ENCODE measurements at regions of chr2 and their contacts with region 1.

Region 1: DNA sequence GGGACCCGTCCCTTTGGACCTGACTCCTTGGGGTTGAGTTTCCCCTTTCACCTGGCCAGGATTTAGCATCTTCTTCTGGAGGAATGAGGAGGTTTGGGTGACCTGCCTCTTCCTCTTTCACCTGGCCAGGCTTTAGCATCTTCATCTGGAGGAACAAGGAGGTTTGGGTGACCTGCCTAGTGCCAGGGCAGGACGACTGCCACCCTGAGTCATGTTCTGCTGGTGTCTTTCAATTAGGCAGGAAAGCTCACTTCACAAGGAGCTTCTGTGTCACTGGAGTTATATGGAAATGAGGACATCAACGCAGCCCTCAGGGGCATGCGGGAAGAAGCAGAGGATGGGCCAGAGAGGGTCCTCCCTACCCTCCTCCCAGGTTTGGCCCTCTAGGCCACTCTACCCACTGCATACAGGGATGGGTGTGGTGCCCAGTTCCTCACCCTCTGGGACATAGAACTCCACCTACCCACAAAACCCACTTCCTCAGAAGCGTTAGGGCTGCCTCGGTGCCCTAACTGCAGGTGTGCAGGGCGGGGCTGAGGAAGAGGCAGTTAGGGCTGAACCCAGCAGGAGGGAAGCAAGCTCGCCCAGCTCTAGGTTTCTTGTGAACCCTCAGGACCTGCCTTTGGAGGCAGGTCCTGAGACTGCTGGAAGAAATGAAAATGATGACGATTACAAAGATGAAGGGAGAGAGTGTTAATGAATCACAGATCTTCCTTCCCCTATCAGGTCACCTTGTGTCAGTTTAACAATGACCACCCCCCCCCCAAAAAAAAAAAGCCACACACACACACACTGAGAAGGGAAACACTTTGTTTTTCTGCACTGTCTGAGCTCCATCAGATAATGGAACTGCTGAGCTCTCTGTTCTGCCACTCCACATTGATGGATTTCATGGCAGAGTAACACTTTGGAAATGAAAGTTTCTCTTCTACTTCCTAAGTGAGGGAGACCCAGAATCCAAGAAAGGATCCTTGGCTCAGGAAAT is 71.0 kb downstream of the ARL4C start:
- DNase-seq: peak; percentile 88
- H3K4me3 Mint-ChIP-seq: peak overlapping the region; percentile 57
- H3K27ac Mint-ChIP-seq: peak overlapping the region; percentile 99
- H3K4me1 Mint-ChIP-seq: peaks cover 85% of the 10 kb centered on the region
- H3K27me3 Mint-ChIP-seq: no peaks in the 10 kb centered on the region

Region 2: GRCh38 chr2:234278556-234279255 is 147.2 kb before region 1 on chr2:
- CTCF ChIA-PET with region 1: interaction called, 4 read pairs
- POLR2A ChIA-PET with region 1: interaction called, 16 read pairs
- DNase-seq: peak; percentile 39
- H3K4me3 Mint-ChIP-seq: no peak overlapping the region
- H3K27ac Mint-ChIP-seq: peak overlapping the region; percentile 89
- H3K4me1 Mint-ChIP-seq: peaks cover 79% of the 10 kb centered on the region
- H3K27me3 Mint-ChIP-seq: no peaks in the 10 kb centered on the region

Region 3: DNA sequence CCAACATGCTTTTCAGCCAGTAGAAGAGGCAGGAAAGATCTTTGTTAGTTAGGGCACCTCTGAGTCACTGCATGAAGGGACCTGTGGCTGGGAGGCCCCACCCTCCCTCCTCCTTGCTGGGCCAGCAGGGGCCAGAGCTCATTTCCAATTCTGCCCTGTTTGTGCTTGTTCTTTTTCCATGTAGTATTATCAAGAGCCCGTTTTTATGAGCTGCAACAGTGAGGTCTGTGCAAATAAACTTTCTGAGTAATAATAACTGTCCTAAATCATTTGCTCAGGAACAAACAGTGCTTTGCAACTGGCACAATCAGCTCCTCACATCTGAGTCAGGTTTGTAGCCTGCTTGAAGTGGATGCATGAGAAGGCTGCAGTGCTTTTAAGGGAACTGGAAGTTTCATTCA is 57.0 kb before region 1 on chr2:
- CTCF ChIA-PET with region 1: interaction called, 6 read pairs
- POLR2A ChIA-PET with region 1: interaction called, 19 read pairs
- DNase-seq: peak; percentile 69
- H3K4me3 Mint-ChIP-seq: no peak overlapping the region
- H3K27ac Mint-ChIP-seq: peak overlapping the region; percentile 85
- H3K4me1 Mint-ChIP-seq: peaks cover 77% of the 10 kb centered on the region
- H3K27me3 Mint-ChIP-seq: no peaks in the 10 kb centered on the region

Region 4: DNA sequence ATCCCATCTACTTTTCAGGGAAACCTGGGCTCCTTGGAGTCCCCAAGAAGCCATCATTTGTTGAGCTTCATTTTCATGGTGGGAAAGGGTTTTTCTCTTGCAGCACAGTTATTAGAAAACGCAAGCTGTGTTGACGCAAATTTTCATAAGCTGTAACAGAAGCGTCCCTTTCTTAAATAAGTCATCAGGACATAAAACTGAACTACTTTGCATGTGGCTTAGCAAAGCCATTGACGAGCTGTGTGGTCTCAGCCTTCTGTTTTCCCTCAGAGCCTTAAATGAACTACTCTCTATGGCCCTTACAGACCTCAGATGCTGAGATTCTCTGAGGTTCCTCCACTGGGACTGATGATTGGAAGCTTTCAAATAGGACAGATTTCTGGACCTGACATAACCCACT is 14.1 kb before region 1 on chr2:
- CTCF ChIA-PET with region 1: interaction called, 6 read pairs
- POLR2A ChIA-PET with region 1: interaction called, 14 read pairs
- DNase-seq: no peak
- H3K4me3 Mint-ChIP-seq: no peak overlapping the region
- H3K27ac Mint-ChIP-seq: no peak overlapping the region
- H3K4me1 Mint-ChIP-seq: peaks cover 25% of the 10 kb centered on the region
- H3K27me3 Mint-ChIP-seq: no peaks in the 10 kb centered on the region

Region 5: DNA sequence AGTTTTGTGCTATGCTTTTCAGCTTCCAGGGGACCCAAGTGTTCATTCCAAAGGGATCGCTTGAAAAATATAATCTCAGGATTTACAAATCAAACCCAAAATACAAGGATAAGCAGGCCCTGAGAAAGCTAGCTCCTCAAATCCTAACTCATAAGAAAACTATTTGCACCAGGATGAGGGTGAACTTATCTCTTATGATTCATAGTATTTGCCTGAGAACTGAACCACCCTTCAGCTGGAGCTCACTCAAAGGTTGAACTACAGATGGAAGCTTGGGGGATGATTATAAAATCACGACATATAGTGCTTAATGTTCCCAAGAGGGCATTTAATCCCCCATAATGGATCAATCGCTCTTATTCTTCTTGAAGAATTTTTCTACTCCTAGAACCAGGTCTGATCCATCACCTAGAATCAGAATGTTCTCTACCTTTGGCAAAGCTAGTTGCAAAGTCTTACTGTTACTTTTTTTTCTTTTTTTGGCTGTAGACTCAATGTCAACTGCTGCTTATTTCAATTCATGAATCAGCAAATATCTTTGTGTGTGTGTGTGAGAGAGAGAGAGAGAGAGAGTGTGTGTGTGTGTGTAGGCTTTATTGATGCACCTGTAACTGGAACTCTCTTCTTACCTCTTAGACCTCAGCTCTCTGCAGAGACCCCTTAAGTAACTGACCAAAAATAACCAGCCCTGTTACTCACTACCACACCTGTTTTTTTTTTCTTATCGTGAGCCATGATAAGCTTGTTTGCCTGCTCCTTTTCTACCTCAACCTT is 26.1 kb after region 1 on chr2:
- CTCF ChIA-PET with region 1: interaction called, 50 read pairs
- POLR2A ChIA-PET with region 1: interaction called, 410 read pairs
- DNase-seq: no peak
- H3K4me3 Mint-ChIP-seq: peak overlapping the region; percentile 72
- H3K27ac Mint-ChIP-seq: peak overlapping the region; percentile 81
- H3K4me1 Mint-ChIP-seq: peaks cover 83% of the 10 kb centered on the region
- H3K27me3 Mint-ChIP-seq: no peaks in the 10 kb centered on the region

Region 6: DNA sequence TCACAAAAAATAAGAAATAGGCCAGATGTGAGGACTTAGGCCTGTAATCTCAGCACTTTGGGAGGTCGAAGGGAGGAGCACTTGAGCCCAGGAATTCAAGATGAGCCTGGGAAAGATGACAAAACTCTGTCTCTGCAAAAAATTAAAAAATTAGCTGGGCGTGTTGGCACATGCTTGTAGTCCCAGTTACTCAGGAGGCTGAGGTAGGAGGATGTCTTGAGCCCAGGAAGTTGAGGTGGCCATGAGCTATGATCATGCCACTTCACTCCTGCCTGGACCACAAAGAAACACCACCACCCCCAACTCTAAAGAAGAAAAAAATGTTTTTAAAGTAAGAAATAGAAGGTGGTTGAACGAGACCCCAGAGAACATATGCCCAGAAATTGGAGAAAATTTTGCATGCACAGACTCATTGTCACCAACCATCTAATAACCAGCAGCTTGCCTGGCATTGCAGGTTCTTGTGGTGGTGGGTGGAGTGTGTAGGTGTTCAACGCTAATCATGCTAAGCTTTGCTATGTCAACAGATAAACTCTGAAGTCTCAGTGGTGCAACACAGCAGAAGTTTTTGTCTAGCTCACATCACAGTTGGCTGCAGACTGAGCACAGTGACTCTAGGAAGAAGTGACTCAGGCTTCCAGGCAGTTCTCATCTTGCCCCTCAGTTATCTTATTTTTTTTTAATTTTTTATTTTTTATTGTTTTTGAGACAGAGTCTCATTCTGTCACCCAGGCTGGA is 52.4 kb after region 1 on chr2:
- CTCF ChIA-PET with region 1: interaction called, 10 read pairs
- POLR2A ChIA-PET with region 1: interaction called, 229 read pairs
- DNase-seq: no peak
- H3K4me3 Mint-ChIP-seq: no peak overlapping the region
- H3K27ac Mint-ChIP-seq: peak overlapping the region; percentile 80
- H3K4me1 Mint-ChIP-seq: peaks cover 74% of the 10 kb centered on the region
- H3K27me3 Mint-ChIP-seq: no peaks in the 10 kb centered on the region

Measured in activated CD4-positive, alpha-beta memory T cell treated with anti-CD3 and anti-CD28 coated beads, Interleukin-2, amount 10 ng/mL, durations not matched to agents 7 days and 5 days (primary cell).